ENCODE measurements at regions of chr16 and their contacts with region 1.

Region 1: DNA sequence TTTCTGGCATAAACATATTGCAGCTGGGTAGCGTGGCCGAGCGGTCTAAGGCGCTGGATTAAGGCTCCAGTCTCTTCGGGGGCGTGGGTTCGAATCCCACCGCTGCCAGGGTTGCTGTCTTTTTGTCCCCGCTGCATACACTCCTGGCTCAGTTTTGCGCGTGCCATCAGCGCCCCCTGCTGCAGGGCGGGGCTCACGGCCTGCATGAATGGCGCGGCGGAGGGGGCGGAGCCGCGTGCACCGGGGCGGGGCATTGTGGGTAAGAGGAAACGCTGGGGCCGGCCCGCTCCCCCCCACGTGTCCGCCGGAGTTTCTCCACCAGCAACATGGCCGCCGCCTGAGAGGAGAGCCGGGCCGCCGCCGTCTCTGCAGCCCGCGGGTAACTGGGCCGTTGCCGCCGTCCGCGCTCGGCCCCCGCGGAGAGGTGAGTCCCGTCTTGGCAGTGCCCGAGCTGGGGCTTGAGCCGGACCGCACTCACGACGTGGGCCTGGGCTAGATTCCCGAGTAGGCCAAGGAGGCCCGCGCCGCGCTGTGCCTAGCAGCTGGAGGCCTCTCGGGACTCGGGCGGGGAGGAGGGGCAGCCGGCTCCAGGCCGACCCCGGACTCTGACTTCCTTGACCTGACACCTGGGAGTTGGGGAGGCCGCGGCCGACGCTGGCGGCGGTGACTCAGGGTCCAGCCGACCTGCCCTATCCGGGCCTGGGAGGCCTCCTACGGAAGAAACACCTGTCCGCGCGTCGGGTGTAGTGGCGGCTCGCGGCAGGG is at the start of gene POLR3E:
- DNase-seq: peak; percentile 96
- CTCF ChIP-seq: peak; percentile 97

Region 2: GRCh38 chr16:22206013-22206841 is 91.1 kb before region 1 on chr16 and contains the start of gene EEF2K:
- CTCF ChIA-PET with region 1: interaction called, 45 read pairs
- POLR2A ChIA-PET with region 1: no interaction called
- DNase-seq: peak; percentile 93
- CTCF ChIP-seq: peak; percentile 87

Region 3: DNA sequence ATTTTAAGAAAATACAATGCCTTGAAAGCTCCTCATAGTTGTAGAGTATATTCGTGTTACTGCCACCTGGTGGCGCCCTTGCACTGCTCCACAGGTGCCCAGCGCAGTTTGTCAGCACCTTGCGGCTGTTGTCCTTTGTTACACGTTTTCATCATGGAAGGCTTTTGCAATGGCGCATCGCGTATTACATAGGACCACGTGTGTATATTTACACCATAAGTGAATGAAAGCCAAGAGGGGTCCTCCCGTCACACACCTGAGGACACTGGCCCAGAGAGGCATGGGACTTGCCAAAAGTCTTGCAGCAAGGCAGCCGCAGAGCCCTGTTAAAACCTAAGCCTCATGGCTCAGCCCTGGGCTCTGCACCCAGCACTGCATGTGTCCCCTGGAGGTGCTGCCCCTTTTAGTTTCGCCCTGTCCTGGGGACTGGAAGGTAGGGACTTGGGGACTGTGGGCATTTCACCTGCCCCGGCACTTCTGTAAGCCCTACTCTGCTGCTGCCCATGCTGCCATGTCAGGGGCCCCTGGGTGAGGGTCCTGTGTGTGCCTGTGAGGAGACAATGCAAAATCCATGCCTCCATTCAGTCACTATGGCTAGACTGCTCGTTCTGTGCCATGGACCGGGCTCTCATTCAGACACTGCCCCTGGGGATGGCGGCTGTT is 24.2 kb after region 1 on chr16:
- CTCF ChIA-PET with region 1: interaction called, 12 read pairs
- POLR2A ChIA-PET with region 1: no interaction called
- DNase-seq: peak; percentile 79
- CTCF ChIP-seq: peak; percentile 75

Region 4: DNA sequence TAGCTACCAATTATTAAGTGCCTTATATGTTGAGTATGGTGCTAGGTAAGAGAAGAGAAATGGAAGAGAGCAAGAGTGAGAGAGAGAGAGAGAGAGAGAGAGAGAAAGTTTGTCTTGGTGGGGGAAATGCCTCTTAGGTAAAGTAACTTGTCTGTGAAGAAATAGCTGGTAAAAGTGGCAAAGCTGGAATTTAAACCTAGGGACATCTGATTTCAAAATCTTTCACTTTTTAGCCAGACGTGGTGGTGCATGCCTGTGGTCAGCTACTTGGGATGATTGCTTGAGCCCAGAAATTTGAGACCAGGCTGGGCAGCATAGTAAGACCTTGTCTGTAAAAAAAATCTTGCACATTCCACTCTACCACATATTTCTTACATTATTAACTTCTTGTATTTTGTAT is 100.2 kb after region 1 on chr16:
- CTCF ChIA-PET with region 1: no interaction called
- POLR2A ChIA-PET with region 1: no interaction called
- DNase-seq: no peak
- CTCF ChIP-seq: no peak

Region 5: DNA sequence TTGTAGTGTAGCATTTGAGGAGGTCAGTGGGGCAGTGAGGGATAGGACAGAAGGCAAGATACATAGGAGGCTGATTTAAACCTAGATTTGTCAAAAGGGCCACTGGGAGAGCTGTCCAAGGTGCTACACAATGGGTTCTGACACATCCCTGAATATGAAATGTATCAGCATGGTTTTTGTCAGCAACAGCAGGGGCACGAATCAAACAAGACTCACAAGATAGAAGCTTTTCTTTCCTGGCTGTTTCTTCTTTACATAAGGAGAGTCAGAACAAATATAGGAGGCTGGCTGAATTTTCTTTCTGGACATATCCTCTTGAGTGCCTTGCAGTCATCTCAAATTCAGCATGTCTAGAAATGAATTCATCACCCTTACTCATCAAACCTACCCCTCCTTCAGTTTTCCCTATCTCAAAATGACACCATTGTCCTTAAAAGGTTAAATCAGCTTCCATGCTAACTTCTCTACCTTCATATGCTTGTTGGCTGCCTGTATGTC is 343.9 kb after region 1 on chr16:
- CTCF ChIA-PET with region 1: no interaction called
- POLR2A ChIA-PET with region 1: no interaction called
- DNase-seq: no peak
- CTCF ChIP-seq: no peak

Measured in GM10248 (cell line).